ENCODE measurements at regions of chr15 and their contacts with region 1.

Region 1: GRCh38 chr15:96345560-96346399 is 15.3 kb downstream of the NR2F2 start:
- DNase-seq: no peak
- H3K4me3 Mint-ChIP-seq: no peak overlapping the region
- H3K27ac Mint-ChIP-seq: no peak overlapping the region
- H3K4me1 Mint-ChIP-seq: no peaks in the 10 kb centered on the region
- H3K27me3 Mint-ChIP-seq: peaks cover 95% of the 10 kb centered on the region

Region 2: DNA sequence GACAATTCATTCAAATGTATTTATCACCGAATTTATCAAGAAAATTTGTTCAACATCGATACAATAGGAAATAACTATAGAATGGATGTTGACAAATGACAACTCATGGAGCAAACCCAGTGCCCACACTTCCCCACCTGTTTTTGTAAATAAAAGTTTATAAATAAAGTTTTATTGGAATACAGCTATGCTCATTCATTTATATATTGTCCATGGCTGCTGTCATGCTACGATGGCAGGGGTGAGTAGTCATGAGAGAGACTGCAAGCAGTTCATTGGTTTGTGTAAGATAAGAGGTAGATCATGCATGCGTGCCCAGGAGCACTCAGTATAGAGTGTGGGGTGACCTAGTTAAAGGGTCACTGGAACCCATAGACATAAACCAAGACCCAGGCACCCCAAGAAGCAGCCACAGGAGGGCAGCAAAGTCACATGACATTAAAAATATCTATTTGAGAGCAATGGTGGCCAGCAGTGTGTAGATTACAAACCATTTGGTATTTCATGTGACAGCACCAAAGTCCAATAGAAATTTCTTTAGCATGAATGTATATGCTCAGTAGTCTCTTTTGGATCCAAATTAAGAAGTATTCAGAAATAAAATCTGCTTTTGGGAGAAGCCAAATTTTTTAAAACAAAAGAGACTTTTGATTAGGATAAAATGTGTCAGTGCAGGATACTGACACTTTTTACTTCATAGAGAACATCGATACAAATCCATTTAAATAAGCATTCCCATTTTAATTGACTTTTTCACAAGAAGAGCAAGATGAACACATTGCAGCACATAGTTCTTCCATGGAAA is 1319.7 kb before region 1 on chr15:
- intact Hi-C with region 1: loop called (anchors 10 kb)
- DNase-seq: no peak
- H3K4me3 Mint-ChIP-seq: no peak overlapping the region
- H3K27ac Mint-ChIP-seq: no peak overlapping the region
- H3K4me1 Mint-ChIP-seq: no peaks in the 10 kb centered on the region
- H3K27me3 Mint-ChIP-seq: no peaks in the 10 kb centered on the region

Region 3: GRCh38 chr15:95259513-95259912 is 1086.3 kb before region 1 on chr15:
- intact Hi-C with region 1: loop called (anchors 5 kb)
- DNase-seq: peak; percentile 41
- H3K4me3 Mint-ChIP-seq: no peak overlapping the region
- H3K27ac Mint-ChIP-seq: no peak overlapping the region
- H3K4me1 Mint-ChIP-seq: peaks cover 6% of the 10 kb centered on the region
- H3K27me3 Mint-ChIP-seq: peaks cover 55% of the 10 kb centered on the region

Region 4: DNA sequence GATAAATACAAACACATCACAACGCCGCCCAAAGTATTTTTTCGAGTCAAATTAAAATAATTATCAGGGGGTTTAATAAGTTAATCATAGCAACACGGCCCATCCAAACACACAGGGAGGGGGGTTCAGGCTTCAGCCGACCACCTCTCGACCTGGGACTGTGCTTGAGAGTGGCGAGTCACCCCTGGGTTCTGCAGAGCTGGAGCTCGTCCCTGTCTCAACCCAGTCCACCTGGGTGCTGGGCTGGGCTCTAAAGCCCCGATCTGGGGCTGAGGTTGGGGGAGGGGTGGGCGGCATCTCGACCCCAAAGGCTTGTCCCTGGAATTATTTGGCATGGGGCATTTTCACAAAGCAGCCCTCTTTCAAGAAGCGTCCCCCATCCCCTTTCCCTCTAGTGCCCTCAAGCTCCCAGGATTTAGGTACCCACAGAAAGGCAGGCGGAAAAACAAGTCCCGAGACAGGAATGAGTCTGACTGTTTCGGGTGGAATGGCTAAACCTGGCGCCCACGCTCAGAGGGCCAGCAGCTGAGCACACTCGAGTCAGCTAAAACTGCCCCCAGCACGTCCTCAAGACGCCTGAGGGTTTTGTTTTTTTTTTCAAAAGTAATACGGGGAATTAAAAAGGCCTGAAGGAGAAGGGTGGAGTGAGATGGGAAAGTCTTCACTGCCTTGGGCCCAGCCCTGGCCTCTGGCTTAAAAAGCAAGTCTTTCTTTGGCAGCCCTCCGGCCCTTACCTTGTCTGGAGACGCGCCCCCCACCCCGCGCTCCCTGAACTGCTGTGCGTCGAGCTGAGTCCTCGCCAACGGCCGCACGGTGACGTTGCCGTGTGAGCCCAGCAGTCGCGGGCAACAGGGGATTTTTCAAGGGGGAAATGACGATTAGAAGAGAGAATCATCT is 17.2 kb after region 1 on chr15:
- intact Hi-C with region 1: loop called (anchors 2 kb)
- DNase-seq: no peak
- H3K4me3 Mint-ChIP-seq: no peak overlapping the region
- H3K27ac Mint-ChIP-seq: no peak overlapping the region
- H3K4me1 Mint-ChIP-seq: peaks cover 9% of the 10 kb centered on the region
- H3K27me3 Mint-ChIP-seq: peaks cover 81% of the 10 kb centered on the region

Region 5: DNA sequence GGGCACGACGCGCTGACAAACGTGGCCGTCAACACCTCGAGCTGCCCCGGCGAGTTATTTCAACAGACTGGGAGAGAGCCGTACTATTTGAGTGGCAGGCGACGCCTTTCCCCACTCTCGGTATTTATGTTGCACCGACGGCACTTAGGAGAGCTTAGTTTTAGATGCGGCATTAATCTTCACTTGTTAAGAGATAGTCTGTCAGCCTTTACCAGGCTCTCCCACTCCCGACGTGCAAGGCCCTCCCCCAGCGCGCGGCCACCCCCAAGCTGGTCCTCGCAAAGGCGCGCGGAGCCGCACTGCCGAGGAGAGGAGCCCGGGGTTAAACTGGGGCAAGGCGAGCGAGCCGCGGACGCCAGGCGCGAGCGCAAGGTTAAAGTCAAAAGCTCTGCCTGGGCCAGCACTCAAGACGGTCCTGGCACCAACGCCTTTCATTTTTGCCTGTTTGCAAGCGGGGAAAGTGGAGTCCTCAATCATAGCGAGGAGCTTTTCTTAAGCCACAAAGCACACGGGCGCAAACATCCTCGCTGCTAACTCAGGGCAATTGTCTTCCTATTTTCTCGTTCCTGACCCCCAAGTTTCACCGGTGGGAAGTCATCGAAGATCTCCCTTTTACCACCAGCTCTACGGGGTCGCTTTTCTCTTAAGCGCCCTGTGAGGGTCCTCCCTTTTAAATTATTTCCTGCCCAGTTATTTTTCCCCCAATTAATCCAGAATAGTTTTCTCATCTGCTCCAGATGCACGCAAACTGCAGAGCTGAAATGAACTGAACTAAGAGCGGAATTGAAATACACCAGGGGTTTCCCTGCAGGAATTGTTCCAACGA is 71.4 kb after region 1 on chr15:
- intact Hi-C with region 1: loop called (anchors 5 kb)
- DNase-seq: no peak
- H3K4me3 Mint-ChIP-seq: no peak overlapping the region
- H3K27ac Mint-ChIP-seq: no peak overlapping the region
- H3K4me1 Mint-ChIP-seq: no peaks in the 10 kb centered on the region
- H3K27me3 Mint-ChIP-seq: peaks cover 79% of the 10 kb centered on the region